ENCODE measurements at regions of chr10 and their contacts with region 1.

Region 1: GRCh38 chr10:43689955-43690771 is 41.5 kb upstream of the ZNF32 start:
- DNase-seq: peak; percentile 73 to 93 (median 82)
- ATAC-seq: peak; percentile 99
- H3K4me3 ChIP-seq: peak overlapping the region; percentile 61 to 83
- H3K4me3 Mint-ChIP-seq: peak overlapping the region; percentile 88
- H3K27ac ChIP-seq: peak overlapping the region in 1 of 2 experiments; percentile 49
- H3K27ac Mint-ChIP-seq: peak overlapping the region; percentile 52
- H3K4me1 ChIP-seq: peaks cover 8% of the 10 kb centered on the region
- H3K4me1 Mint-ChIP-seq: peaks cover 5% of the 10 kb centered on the region
- H3K27me3 ChIP-seq: no peaks in the 10 kb centered on the region
- H3K27me3 Mint-ChIP-seq: peaks cover 29% of the 10 kb centered on the region
- CTCF ChIP-seq: peak; percentile 86

Region 2: DNA sequence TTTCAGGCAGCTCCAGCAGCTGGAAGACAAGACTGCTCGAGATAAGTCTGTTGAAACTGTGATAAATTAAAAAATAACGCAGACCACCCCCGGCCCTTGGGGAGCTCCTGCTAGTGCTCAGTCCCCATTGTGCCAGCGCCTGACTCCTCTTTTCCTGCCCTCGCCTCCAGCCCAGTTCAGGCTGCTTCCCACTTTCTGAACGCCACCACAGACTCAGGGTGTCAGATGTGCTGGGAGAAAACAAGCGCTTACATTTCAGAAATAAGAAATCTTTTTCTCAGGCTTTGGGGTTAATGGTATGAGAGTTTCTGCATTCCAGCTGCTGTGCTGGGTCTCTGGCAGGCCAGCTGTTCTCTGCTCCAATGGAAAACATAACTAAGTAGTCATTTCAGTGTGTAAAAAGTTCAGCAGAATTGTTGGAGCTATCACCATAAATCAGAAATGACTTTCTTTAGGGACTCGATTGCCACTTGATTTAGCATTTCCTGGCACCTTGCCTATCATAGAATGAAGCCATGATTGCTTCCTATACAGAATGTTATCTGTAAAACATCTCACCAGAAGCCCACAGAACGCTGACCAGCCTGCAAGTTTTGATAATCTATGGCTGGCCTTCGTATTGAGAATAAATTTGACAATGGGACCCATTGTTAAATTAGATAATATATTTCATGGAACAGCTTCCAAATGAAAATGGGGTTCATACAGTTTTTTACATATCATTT is 215.5 kb after region 1 on chr10:
- CTCF ChIA-PET with region 1: no interaction called
- POLR2A ChIA-PET with region 1: no interaction called
- intact Hi-C with region 1: loop called in 1 of 2 experiments (anchors 2 kb)
- DNase-seq: no peak
- ATAC-seq: no peak
- H3K4me3 ChIP-seq: no peak overlapping the region
- H3K4me3 Mint-ChIP-seq: no peak overlapping the region
- H3K27ac ChIP-seq: no peak overlapping the region
- H3K27ac Mint-ChIP-seq: no peak overlapping the region
- H3K4me1 ChIP-seq: no peaks in the 10 kb centered on the region
- H3K4me1 Mint-ChIP-seq: no peaks in the 10 kb centered on the region
- H3K27me3 ChIP-seq: no peaks in the 10 kb centered on the region
- H3K27me3 Mint-ChIP-seq: peaks cover 2% of the 10 kb centered on the region
- CTCF ChIP-seq: no peak

Region 3: GRCh38 chr10:44030143-44030542 is 340.0 kb after region 1 on chr10:
- CTCF ChIA-PET with region 1: interaction called, 14 read pairs
- POLR2A ChIA-PET with region 1: no interaction called
- intact Hi-C with region 1: loop called in 1 of 2 experiments (anchors 2 kb)
- DNase-seq: peak in 4 of 9 experiments; percentile 3 to 54 (median 34)
- ATAC-seq: no peak
- H3K4me3 ChIP-seq: no peak overlapping the region
- H3K4me3 Mint-ChIP-seq: no peak overlapping the region
- H3K27ac ChIP-seq: no peak overlapping the region
- H3K27ac Mint-ChIP-seq: no peak overlapping the region
- H3K4me1 ChIP-seq: no peaks in the 10 kb centered on the region
- H3K4me1 Mint-ChIP-seq: no peaks in the 10 kb centered on the region
- H3K27me3 ChIP-seq: no peaks in the 10 kb centered on the region
- H3K27me3 Mint-ChIP-seq: peaks cover 9% of the 10 kb centered on the region
- CTCF ChIP-seq: no peak

Region 4: DNA sequence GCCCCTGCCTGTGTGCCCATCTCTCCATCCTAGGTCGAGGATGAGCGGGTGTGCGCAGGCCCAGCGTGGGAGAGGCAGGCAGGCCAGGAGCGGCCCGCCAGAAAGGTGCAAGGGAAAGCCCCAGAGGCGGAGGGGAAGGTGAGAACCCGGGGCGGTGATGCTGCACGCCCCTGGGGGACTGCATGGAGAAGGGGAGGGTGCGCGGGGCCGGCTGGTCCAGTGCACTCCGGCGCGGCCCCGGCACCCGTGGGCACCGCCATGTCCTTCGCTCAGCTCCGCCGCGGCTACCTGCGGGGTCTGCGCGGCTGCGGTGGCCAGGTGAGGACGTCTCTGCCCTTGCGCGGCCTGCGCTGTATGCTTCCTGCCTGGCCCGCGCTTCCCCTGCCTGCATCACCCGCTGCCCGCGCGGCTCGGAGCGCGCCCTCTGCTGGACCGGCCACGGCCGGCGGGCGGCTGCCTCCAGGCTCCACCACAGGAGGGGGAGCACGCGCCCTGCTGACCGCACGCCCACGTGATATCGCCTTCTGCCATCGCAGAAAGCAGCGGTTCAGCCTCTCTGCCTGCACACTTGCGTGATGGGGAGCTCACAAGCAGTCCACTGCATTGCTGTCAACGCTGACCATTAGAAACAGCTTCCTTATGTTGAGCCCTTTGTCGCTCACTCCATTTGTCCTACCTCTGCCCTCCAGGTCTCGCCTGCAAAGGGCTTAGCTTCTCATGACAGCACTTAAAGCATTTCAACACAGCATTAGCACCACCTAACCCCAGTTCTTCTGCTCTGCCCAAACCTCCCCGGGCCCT is 620.8 kb after region 1 on chr10:
- CTCF ChIA-PET with region 1: interaction called, 6 read pairs
- POLR2A ChIA-PET with region 1: no interaction called
- intact Hi-C with region 1: loop called in 1 of 2 experiments (anchors 5 kb)
- DNase-seq: peak; percentile 33 to 87 (median 61)
- ATAC-seq: peak; percentile 76
- H3K4me3 ChIP-seq: peak overlapping the region; percentile 25 to 28
- H3K4me3 Mint-ChIP-seq: peak overlapping the region; percentile 55
- H3K27ac ChIP-seq: peak overlapping the region; percentile 51 to 70
- H3K27ac Mint-ChIP-seq: peak overlapping the region; percentile 64
- H3K4me1 ChIP-seq: peaks cover 7% of the 10 kb centered on the region
- H3K4me1 Mint-ChIP-seq: peaks cover 10% of the 10 kb centered on the region
- H3K27me3 ChIP-seq: no peaks in the 10 kb centered on the region
- H3K27me3 Mint-ChIP-seq: peaks cover 14% of the 10 kb centered on the region
- CTCF ChIP-seq: peak; percentile 32

Region 5: GRCh38 chr10:44386546-44387052 is 696.4 kb after region 1 on chr10:
- CTCF ChIA-PET with region 1: interaction called, 10 read pairs
- POLR2A ChIA-PET with region 1: no interaction called
- intact Hi-C with region 1: loop called in 1 of 2 experiments (anchors 1 kb)
- DNase-seq: peak in 5 of 9 experiments; percentile 16 to 54 (median 44)
- ATAC-seq: no peak
- H3K4me3 ChIP-seq: no peak overlapping the region
- H3K4me3 Mint-ChIP-seq: no peak overlapping the region
- H3K27ac ChIP-seq: no peak overlapping the region
- H3K27ac Mint-ChIP-seq: no peak overlapping the region
- H3K4me1 ChIP-seq: no peaks in the 10 kb centered on the region
- H3K4me1 Mint-ChIP-seq: peaks cover 3% of the 10 kb centered on the region
- H3K27me3 ChIP-seq: peaks cover 3 to 5% of the 10 kb centered on the region in 2 experiments
- H3K27me3 Mint-ChIP-seq: peaks cover 30% of the 10 kb centered on the region
- CTCF ChIP-seq: peak; percentile 41

Region 6: DNA sequence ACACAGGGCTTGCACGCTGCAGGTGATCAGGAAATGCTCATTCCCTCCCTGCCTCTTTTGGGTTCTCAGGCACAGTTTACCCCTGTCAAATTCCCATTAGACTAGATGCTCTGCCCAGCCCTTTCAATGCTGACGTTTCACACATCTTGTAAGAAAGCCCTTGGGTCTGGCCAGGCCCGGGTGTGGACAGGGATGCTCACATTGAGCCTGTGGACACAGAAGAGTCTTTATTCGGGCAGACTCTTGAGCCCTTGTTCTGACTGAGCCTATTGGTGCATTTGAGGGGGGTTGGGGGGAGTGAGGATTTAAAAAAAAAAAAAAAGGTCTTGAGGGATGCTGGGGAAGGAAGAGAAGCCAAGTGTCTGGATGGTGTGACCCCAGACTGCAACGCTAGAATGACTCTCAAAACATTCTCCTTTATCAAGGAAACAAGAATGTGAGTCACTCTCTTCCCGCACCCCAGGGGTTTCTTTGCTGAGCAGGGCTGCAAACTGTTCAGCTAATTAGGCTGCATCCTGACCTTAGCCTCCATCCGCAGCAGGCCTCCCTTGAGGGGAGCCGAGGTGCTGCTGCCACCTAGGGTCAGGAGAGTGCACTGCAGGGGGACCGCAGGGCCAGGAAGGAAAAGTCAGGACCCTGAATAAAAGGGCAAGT is 1167.3 kb after region 1 on chr10:
- CTCF ChIA-PET with region 1: interaction called, 11 read pairs
- POLR2A ChIA-PET with region 1: interaction called, 4 read pairs
- intact Hi-C with region 1: loop called in 1 of 2 experiments (anchors 5 kb)
- DNase-seq: peak in 8 of 9 experiments; percentile 33 to 69 (median 58)
- ATAC-seq: peak; percentile 84
- H3K4me3 ChIP-seq: no peak overlapping the region
- H3K4me3 Mint-ChIP-seq: no peak overlapping the region
- H3K27ac ChIP-seq: no peak overlapping the region
- H3K27ac Mint-ChIP-seq: no peak overlapping the region
- H3K4me1 ChIP-seq: no peaks in the 10 kb centered on the region
- H3K4me1 Mint-ChIP-seq: no peaks in the 10 kb centered on the region
- H3K27me3 ChIP-seq: no peaks in the 10 kb centered on the region
- H3K27me3 Mint-ChIP-seq: peaks cover 4% of the 10 kb centered on the region
- CTCF ChIP-seq: peak; percentile 93